ENCODE measurements at regions of chr15 and their contacts with region 1.

Region 1: GRCh38 chr15:34367101-34368081 is at the start of gene LPCAT4:
- DNase-seq: peak; percentile 93
- ATAC-seq: peak; percentile 88
- H3K4me3 Mint-ChIP-seq: peak within 1 kb of the TSS; percentile 99
- H3K27ac Mint-ChIP-seq: peak within 1 kb of the TSS; percentile 97
- H3K4me1 Mint-ChIP-seq: peaks cover 33% of the 10 kb centered on the region
- H3K27me3 Mint-ChIP-seq: no peaks in the 10 kb centered on the region
- CTCF ChIP-seq: peak; percentile 93
- total RNA-seq, gene LPCAT4: 55.6 to 56.9 TPM

Region 2: GRCh38 chr15:34109797-34110663 is 257.4 kb before region 1 on chr15:
- CTCF ChIA-PET with region 1: interaction called, 11 read pairs
- POLR2A ChIA-PET with region 1: no interaction called
- intact Hi-C with region 1: no loop called
- DNase-seq: peak; percentile 15
- ATAC-seq: no peak
- H3K4me3 Mint-ChIP-seq: no peak overlapping the region
- H3K27ac Mint-ChIP-seq: no peak overlapping the region
- H3K4me1 Mint-ChIP-seq: no peaks in the 10 kb centered on the region
- H3K27me3 Mint-ChIP-seq: no peaks in the 10 kb centered on the region
- CTCF ChIP-seq: peak; percentile 71

Region 3: DNA sequence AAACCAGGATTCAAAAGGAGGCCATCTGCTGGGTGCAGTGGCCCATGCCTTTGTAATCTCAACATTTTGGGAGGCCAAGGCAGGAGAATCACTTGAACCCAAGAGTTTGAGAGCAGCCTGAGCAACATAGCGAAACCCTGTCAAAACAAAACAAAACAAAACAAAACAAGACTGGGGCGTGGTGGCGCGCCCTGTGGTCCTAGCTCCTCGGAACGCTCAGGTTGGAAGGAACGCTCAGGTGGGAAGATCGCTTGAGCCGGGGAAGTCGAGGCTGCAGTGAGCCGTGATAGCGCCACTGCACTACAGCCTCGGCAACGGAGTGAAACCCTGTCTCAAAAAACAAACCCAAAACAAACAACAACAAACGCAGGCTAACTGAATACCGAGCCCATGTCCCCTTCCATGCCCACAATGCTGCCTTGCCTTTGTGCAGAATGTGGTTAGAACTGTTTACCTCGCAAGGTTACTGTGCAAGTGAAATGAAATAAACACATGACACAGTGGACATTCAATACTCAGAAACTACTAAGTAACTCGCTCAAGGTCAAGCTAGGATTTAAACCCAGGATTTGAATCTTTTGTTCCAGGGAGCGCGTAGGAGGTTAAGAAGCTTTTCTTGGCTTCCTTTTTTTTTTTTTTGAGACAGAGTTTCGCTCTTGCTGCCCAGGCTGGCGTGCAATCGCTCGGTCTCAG is 143.3 kb before region 1 on chr15:
- CTCF ChIA-PET with region 1: interaction called, 4 read pairs
- POLR2A ChIA-PET with region 1: interaction called, 12 read pairs
- intact Hi-C with region 1: no loop called
- DNase-seq: no peak
- ATAC-seq: peak; percentile 2
- H3K4me3 Mint-ChIP-seq: peak overlapping the region; percentile 95
- H3K27ac Mint-ChIP-seq: peak overlapping the region; percentile 90
- H3K4me1 Mint-ChIP-seq: peaks cover 18% of the 10 kb centered on the region
- H3K27me3 Mint-ChIP-seq: peaks cover 1% of the 10 kb centered on the region
- CTCF ChIP-seq: no peak

Region 4: DNA sequence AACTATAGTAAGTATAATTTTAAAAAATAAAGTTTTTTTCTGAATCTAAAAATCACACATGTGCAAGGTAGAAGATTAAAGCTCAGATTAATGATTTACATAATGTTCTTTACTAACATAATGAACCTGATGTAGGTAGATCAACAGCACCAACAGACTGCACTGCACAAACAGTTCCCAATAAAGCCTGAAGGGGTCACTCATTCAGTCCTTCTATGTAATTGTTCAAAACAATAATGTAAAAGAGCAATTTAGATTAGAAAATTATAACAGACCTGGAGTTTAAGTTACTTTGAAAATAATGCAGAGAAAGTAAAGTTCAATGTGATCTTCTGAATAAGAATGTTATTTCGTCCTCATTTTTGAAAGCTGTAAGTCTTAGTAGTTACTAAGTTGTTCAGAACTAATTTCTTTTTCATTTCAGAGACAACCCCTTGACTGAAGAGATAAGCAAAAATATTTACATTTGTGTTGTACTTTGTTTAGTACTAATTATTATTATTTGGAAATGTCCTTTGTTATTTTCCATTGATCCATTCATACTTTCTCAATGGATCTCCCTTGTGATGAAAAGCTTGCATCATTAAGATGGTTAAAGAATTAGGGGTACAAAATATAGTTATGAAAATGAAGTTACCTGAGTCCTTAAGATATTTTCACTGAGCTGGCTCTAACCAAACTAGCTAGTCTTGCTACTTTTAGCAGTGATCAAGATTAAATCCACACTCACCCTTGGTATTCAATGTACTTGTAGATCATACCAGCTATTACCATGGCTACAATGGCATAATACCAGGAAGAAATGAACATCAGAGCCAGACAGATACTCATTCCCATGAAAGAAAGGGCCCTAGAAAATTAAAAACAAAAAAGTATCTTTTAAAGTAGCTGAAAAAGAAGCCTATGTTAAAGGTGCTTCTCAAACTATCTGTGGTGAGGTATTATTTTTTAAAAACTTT is 125.7 kb before region 1 on chr15:
- CTCF ChIA-PET with region 1: interaction called, 79 read pairs
- POLR2A ChIA-PET with region 1: no interaction called
- intact Hi-C with region 1: no loop called
- DNase-seq: peak; percentile 53
- ATAC-seq: peak; percentile 84
- H3K4me3 Mint-ChIP-seq: no peak overlapping the region
- H3K27ac Mint-ChIP-seq: peak overlapping the region; percentile 23
- H3K4me1 Mint-ChIP-seq: peaks cover 32% of the 10 kb centered on the region
- H3K27me3 Mint-ChIP-seq: no peaks in the 10 kb centered on the region
- CTCF ChIP-seq: peak; percentile 83

Region 5: GRCh38 chr15:34331809-34332208 is 35.6 kb before region 1 on chr15:
- CTCF ChIA-PET with region 1: interaction called, 42 read pairs
- POLR2A ChIA-PET with region 1: interaction called, 4 read pairs
- intact Hi-C with region 1: no loop called
- DNase-seq: no peak
- ATAC-seq: peak; percentile 65
- H3K4me3 Mint-ChIP-seq: peak overlapping the region; percentile 52
- H3K27ac Mint-ChIP-seq: peak overlapping the region; percentile 95
- H3K4me1 Mint-ChIP-seq: peaks cover 72% of the 10 kb centered on the region
- H3K27me3 Mint-ChIP-seq: no peaks in the 10 kb centered on the region
- CTCF ChIP-seq: no peak

Region 6: DNA sequence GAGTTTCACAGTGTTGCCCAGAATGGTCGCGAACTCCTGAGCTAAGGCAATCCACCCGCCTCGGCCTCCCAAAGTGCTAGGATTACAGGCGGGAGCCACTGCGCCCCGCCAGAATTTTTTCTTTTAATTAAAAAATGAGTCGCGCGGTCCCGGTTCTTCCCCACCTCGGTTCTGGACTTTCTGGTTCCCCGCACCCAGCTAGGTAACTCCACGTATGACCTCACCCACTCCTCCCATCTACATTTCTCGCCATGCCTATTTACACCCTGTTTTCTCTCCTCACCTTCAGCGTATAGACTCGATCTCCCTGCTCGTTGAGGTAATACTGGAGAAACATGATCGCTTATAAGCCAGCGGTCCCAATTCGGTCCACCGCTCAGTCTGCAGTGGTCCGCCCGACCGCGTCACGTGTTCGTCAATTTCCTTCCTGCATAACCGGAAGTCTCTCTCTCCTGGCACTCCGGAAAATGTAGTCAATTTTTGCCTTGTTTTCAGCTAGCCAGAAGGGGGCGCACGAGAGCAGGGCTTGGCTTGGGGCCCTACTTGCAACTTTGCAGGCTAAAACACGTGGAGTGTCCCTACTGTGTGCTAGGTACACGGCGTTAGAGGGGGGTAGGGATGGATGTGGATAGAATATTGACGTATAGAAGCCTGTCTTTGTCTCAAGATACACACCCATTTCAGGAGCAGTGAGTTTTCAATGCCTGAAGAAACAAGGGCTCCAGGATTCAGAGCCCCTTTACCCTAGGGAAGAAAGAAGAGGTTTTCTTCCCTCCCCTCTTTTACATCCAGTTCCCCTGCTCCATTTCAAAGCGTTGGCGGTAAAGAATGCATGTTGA is 24.4 kb before region 1 on chr15 and contains the starts of genes NOP10 and NUTM1:
- CTCF ChIA-PET with region 1: interaction called, 42 read pairs
- POLR2A ChIA-PET with region 1: interaction called, 4 read pairs
- intact Hi-C with region 1: loop called (anchors 1 kb)
- DNase-seq: peak; percentile 94
- ATAC-seq: peak; percentile 90
- H3K4me3 Mint-ChIP-seq: no peak within 1 kb of the TSS
- H3K27ac Mint-ChIP-seq: peak within 1 kb of the TSS; percentile 82
- H3K4me1 Mint-ChIP-seq: peaks cover 25% of the 10 kb centered on the region
- H3K27me3 Mint-ChIP-seq: no peaks in the 10 kb centered on the region
- CTCF ChIP-seq: peak; percentile 91
- total RNA-seq, gene NOP10: 225 to 226 TPM
- total RNA-seq, gene NUTM1: not detected